Activated naive CD8-positive, alpha-beta T cell treated with anti-CD3 and anti-CD28 coated beads, Interleukin-2, amount 10 ng/mL, durations not matched to agents 7 days and 5 days (primary cell): ENCODE measurements at regions of chr19 and their contacts with region 1.

Region 1: DNA sequence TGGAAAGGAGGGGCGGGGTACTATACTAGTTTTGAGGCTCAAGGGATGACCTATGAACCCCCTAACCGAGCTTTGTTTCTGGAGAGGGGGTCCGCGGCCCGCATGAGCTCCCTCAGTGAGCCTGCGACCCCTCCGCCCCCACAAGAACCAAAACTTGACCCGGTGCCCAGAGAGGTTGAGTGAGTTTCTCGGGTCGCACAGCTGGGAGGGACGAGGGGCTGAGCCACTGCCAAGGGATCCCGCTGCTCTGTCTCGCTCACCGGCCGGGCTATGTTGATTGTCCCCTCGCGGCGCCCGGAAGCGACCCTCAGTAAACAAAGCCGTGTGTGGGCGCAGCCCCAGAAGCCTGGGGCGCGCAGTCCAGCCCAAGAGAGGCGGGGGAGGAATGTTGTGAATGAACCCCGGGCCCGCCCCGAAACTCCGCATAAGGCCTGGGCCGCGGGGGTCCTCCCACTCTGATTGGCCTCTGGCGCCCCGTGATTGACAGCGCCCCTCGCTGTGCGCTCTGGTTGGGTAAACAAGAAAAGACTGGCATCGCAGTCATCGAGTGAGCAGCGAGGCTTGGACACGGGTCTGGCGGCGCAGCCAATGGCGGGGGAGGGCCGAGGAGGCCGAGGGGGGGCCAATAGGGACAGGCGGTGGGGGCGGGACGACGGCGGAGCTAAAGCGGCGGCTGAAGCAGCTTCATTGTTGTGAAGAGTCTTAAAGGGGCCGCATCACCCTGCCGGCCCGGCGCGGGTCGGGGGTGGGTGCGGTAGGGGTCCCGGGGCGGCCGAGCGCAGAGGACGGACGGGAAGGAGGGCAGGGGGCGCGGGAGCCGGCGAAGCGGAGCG is at the start of gene ZSWIM4:
- DNase-seq: peak; percentile 92
- ATAC-seq: peak; percentile 99
- H3K4me3 Mint-ChIP-seq: peak within 1 kb of the TSS; percentile 99
- H3K27ac Mint-ChIP-seq: peak within 1 kb of the TSS; percentile 96
- H3K4me1 Mint-ChIP-seq: peaks cover 30% of the 10 kb centered on the region
- H3K27me3 Mint-ChIP-seq: no peaks in the 10 kb centered on the region
- total RNA-seq, gene ZSWIM4: 9.6 to 9.9 TPM

Region 2: DNA sequence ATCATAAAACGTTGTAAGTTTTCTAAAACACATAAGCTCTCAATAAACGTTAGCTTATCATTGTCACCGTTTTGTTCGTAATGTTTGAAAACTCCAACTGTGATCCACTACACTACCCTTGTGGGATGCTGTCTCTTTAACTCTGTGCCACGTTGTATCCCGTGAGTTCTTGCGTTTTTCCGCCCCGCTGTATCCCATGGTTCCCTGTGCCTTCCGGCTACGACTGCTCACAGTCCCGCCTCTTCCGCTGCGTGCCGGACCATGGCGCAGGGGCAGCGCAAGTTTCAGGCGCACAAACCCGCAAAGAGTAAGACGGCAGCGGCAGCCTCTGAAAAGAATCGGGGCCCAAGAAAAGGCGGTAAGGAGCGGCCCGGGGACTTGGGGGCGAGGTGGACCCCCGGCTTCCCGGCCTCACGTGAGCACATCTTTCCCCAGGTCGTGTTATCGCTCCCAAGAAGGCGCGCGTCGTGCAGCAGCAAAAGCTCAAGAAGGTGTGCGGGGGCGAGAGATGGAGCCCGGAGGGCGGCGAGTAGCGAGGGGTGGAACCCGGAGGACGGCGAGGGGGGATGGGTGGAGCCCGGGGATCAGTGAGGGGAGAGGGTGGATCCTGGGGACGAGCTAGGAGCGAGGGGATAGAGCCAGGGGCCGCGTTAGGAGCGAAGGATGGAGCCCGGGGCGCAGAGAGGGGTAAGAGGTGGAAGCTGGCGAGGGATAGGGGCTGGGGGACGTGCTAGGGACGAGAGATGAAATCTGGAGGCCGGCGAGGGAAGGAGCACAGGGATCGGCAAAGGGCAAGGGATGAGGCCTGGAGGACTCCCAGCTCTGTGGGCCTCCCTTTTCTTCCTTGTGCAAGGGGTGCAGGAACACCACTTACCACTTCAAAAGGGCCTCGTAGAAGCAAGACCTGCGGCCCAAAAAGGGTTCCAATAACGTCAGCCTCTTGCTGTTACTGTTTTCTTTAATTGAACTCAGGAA is 20.5 kb before region 1 on chr19 and contains the start of gene C19orf53:
- POLR2A ChIA-PET with region 1: interaction called, 26 read pairs
- DNase-seq: peak; percentile 84
- ATAC-seq: peak; percentile 95
- H3K4me3 Mint-ChIP-seq: peak within 1 kb of the TSS; percentile 96
- H3K27ac Mint-ChIP-seq: peak within 1 kb of the TSS; percentile 92
- H3K4me1 Mint-ChIP-seq: peaks cover 19% of the 10 kb centered on the region
- H3K27me3 Mint-ChIP-seq: no peaks in the 10 kb centered on the region
- total RNA-seq, gene C19orf53: 85.2 to 88.1 TPM

Region 3: DNA sequence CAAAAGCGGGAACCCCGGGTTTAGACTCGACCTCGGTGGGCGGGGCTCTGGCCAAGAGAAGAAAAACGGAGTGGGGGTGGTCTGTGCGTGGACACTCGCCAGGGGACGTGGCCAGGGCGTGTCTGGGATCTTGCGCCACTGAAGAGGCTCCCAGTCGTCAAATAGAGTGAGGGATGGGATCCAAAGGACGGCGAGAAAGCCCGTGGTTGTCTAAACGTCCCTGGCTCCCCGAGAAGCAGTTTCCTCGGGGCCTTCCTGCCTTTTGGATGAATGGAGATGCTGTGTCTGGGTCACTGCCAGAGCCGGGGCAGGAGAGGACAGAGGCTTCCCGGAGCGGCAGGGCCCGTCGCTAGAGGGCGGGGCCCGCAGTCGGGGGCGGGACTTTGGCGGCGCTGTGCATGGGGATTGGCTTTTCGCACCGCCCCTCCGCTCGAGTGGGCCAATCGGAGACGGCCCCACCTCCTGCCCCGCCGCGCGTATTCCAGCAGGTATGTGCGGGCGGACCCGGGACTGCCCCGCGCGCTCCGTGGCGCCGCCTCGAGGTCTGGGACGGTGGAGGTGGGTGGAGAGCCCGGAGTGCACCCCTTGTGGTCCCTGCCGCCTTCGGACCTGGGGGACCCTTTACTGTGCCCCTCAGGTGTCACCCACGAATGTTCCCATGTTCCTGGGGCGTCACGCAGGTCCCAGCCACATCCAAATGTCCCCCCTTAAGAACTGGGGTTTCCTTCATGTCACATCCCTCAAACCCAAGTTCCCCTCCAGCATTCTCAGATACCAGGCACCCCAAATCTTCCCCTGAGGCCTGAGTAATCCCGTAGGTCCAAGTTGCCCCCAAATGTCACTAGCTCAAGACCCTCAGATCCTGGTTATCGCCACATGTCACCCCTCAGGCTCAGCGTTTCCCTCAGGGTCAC is 38.6 kb after region 1 on chr19:
- POLR2A ChIA-PET with region 1: interaction called, 86 read pairs
- DNase-seq: peak; percentile 96
- ATAC-seq: peak; percentile 69
- H3K4me3 Mint-ChIP-seq: peak overlapping the region; percentile 88
- H3K27ac Mint-ChIP-seq: peak overlapping the region; percentile 83
- H3K4me1 Mint-ChIP-seq: peaks cover 28% of the 10 kb centered on the region
- H3K27me3 Mint-ChIP-seq: no peaks in the 10 kb centered on the region

Region 4: GRCh38 chr19:13846557-13847406 is 51.8 kb after region 1 on chr19:
- POLR2A ChIA-PET with region 1: interaction called, 53 read pairs
- DNase-seq: peak; percentile 93
- ATAC-seq: peak; percentile 53
- H3K4me3 Mint-ChIP-seq: peak overlapping the region; percentile 78
- H3K27ac Mint-ChIP-seq: peak overlapping the region; percentile 96
- H3K4me1 Mint-ChIP-seq: peaks cover 35% of the 10 kb centered on the region
- H3K27me3 Mint-ChIP-seq: no peaks in the 10 kb centered on the region